Activated naive CD4-positive, alpha-beta T cell treated with anti-CD3 and anti-CD28 coated beads for 36 hours (primary cell): ENCODE measurements at regions of chr12 and their contacts with region 1.

Region 1: GRCh38 chr12:67698672-67699581 is 50.4 kb downstream of the DYRK2 start:
- DNase-seq: peak; percentile 74
- H3K4me3 Mint-ChIP-seq: peak overlapping the region; percentile 28
- H3K27ac Mint-ChIP-seq: peak overlapping the region; percentile 64
- H3K4me1 Mint-ChIP-seq: peaks cover 51% of the 10 kb centered on the region
- H3K27me3 Mint-ChIP-seq: no peaks in the 10 kb centered on the region

Region 2: DNA sequence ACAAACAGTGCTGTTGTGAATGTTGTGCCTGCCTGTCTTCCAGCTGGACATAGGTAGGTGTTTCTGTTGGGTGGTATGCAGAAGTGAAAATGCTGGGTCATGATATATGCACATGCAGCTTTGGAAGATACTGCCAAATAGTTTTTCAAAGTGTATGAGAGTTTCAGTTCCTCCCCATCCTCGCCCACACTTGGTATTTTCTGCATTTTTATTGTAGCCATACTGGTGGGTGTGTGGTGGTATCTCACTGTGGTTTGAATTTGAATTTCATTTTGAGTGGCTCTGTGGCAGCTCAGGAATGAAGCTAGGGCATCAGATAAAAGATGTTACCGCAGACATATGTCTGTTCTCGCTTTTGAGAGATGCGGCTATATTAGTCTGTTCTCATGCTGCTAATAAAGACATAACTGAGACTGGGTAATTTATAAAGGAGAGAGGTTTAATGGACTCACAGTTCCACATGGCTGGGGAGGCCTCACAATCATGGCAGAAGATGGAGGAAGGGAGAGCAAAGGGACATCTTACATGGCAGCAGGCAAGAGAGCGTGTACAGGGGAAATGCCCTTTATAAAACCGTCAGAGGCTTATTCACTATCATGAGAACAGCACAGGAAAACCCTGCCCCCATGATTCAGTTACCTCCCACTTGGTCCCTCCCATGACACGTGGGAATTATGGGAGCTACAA is 246.7 kb before region 1 on chr12:
- CTCF ChIA-PET with region 1: no interaction called
- intact Hi-C with region 1: loop called (anchors 2 kb)
- DNase-seq: no peak
- H3K4me3 Mint-ChIP-seq: no peak overlapping the region
- H3K27ac Mint-ChIP-seq: no peak overlapping the region
- H3K4me1 Mint-ChIP-seq: peaks cover 47% of the 10 kb centered on the region
- H3K27me3 Mint-ChIP-seq: peaks cover 2% of the 10 kb centered on the region

Region 3: DNA sequence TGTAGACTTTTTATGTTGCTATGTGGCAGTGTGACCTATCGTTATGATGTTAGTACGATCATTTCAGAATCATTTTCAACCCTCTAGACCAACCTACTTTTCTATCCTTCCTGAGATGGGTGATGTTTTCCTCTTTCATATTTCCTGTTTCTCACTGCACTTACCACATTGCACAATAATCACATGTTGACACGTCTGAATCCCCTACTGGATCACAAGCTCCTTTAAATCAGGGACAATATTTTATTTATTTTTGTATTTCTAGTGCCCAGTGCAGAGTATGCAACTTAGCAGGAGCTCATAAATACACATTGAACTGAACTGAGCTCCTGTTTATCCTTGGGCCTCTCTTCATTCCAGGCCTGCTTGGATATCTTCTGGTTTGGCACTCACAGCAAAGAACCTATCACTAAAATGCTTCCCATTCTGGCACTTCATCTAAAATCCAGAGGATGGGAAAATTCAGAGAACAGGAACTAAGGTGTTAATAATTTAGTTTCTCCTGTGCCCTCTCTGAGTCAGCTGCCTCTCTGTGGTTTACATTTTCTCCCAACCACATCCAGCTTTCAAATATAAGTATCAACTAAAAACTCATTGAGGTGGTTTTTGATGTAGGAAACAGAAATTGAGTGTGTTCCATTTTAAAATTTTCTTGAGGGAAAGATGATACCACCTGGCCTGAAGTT is 119.8 kb before region 1 on chr12:
- CTCF ChIA-PET with region 1: no interaction called
- intact Hi-C with region 1: loop called (anchors 1 kb)
- DNase-seq: peak; percentile 31
- H3K4me3 Mint-ChIP-seq: no peak overlapping the region
- H3K27ac Mint-ChIP-seq: no peak overlapping the region
- H3K4me1 Mint-ChIP-seq: peaks cover 38% of the 10 kb centered on the region
- H3K27me3 Mint-ChIP-seq: peaks cover 3% of the 10 kb centered on the region

Region 4: GRCh38 chr12:67630373-67631088 is 68.4 kb before region 1 on chr12:
- CTCF ChIA-PET with region 1: no interaction called
- intact Hi-C with region 1: loop called (anchors 1 kb)
- DNase-seq: peak; percentile 93
- H3K4me3 Mint-ChIP-seq: peak overlapping the region; percentile 33
- H3K27ac Mint-ChIP-seq: peak overlapping the region; percentile 79
- H3K4me1 Mint-ChIP-seq: peaks cover 81% of the 10 kb centered on the region
- H3K27me3 Mint-ChIP-seq: no peaks in the 10 kb centered on the region

Region 5: DNA sequence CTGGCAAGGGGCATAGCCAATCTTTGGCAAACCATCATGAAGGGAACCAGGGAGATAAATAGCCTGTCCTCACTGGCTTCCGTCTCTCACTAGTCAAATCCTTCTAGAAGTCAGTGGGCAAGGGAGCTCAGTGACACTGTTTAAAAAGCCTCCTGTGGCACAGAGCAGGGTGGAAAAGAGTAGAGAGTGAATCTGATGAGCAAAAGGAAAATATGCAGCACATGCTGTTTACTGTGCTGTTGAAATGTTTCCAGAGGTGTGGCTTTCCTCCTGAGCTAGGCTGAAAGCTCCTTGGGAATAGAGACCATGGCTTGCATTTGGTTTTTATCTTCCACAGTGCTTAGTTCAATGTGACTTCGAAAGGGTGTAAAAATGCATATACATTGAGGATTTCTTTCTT is 58.1 kb before region 1 on chr12:
- CTCF ChIA-PET with region 1: no interaction called
- intact Hi-C with region 1: no loop called
- DNase-seq: no peak
- H3K4me3 Mint-ChIP-seq: no peak overlapping the region
- H3K27ac Mint-ChIP-seq: no peak overlapping the region
- H3K4me1 Mint-ChIP-seq: peaks cover 11% of the 10 kb centered on the region
- H3K27me3 Mint-ChIP-seq: no peaks in the 10 kb centered on the region

Region 6: GRCh38 chr12:67804168-67804567 is 105.2 kb after region 1 on chr12:
- CTCF ChIA-PET with region 1: no interaction called
- intact Hi-C with region 1: loop called (anchors 1 kb)
- DNase-seq: peak; percentile 73
- H3K4me3 Mint-ChIP-seq: no peak overlapping the region
- H3K27ac Mint-ChIP-seq: no peak overlapping the region
- H3K4me1 Mint-ChIP-seq: peaks cover 14% of the 10 kb centered on the region
- H3K27me3 Mint-ChIP-seq: no peaks in the 10 kb centered on the region

Region 7: GRCh38 chr12:67943226-67943892 is 244.4 kb after region 1 on chr12:
- CTCF ChIA-PET with region 1: no interaction called
- intact Hi-C with region 1: loop called (anchors 2 kb)
- DNase-seq: peak; percentile 87
- H3K4me3 Mint-ChIP-seq: no peak overlapping the region
- H3K27ac Mint-ChIP-seq: no peak overlapping the region
- H3K4me1 Mint-ChIP-seq: no peaks in the 10 kb centered on the region
- H3K27me3 Mint-ChIP-seq: peaks cover 3% of the 10 kb centered on the region

Region 8: DNA sequence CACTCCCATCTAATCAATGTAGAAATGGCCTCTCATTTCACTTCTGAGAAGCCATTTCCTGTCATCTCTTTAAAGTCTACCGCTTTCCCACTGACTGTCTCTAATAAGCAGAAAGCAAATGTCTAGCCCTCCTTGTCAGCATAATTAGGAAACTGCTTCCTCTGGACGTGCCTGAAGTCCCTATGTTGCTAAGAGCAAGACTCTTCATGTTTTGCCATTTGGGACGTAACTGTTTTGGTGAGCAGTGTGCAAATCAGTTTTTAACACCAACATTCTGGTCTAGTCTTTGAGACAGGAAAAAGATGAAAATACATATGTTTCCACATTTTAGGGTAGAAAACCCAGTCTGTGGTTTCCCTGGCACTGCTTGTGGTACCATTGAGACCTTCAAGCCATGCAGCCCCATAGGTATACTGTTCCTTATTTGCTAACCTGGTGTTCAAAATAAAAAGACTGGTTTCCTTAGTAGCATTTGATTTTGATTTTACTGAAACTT is 438.5 kb after region 1 on chr12:
- CTCF ChIA-PET with region 1: no interaction called
- intact Hi-C with region 1: loop called (anchors 5 kb)
- DNase-seq: peak; percentile 38
- H3K4me3 Mint-ChIP-seq: no peak overlapping the region
- H3K27ac Mint-ChIP-seq: peak overlapping the region; percentile 91
- H3K4me1 Mint-ChIP-seq: peaks cover 52% of the 10 kb centered on the region
- H3K27me3 Mint-ChIP-seq: no peaks in the 10 kb centered on the region